HEK293T (cell line): ENCODE measurements at regions of chr11 and their contacts with region 1.

Region 1: GRCh38 chr11:73625696-73626318 is 20.6 kb upstream of the PLEKHB1 start:
- DNase-seq: peak; percentile 87

Region 2: GRCh38 chr11:73578592-73579185 is 47.1 kb before region 1 on chr11:
- CTCF ChIA-PET with region 1: no interaction called
- POLR2A ChIA-PET with region 1: no interaction called
- DNase-seq: no peak

Region 3: DNA sequence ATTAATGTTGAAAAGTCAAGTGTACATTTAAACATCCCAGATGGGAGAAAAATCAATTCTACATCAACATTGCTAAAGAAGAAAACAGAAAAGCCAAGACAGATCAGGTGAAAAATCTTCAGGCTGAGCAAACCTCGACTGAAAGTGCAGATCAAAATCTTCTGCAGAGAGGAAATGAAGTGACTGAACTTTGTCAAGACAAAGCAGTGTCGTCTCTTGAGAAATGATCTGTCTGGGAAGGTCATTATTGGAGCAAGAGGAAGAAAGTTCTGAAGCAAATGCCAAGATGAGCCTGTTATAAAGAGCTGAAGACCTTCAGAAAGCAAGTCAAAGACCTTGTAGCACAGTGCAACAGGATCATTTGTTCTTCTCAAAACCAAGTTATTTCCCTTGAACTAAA is 14.8 kb after region 1 on chr11:
- CTCF ChIA-PET with region 1: interaction called, 11 read pairs
- POLR2A ChIA-PET with region 1: no interaction called
- DNase-seq: no peak

Region 4: DNA sequence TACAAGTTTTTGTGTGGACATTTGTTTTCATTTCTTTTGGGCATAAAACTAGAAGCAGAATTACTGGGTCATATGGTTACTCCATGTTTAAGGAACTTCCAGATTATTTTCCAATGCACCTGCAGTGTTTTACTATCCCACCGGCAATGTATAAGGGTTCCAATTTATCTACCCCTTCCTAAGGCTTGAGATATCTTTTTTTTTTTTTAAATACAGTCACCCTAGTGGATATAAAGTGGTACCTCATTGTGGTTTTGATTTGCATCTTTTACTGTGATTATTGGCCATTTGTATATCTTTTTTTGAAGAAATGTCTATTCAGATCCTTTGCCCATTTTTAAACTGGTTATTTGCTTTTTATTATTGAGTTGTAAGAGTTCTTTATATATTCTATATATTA is 417.6 kb after region 1 on chr11:
- CTCF ChIA-PET with region 1: no interaction called
- POLR2A ChIA-PET with region 1: no interaction called
- DNase-seq: no peak

Region 5: DNA sequence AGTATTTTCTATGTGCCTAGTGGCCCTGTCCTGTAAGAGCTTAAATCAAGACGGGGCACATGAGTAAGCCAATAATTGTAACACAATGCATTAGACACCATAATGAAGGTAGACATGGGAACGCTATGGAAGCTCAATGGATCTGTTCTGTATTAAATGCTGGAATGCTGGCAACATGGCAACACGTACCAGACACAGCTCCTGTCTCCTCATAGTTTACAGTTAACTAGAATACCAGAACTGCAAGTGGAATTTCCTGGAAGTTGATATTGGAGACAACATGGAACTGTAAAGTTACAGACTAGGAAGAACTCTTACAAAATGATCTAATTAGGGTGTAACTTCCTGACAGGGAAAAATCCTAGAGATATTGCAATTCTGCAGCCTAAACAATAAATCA is 673.2 kb after region 1 on chr11:
- CTCF ChIA-PET with region 1: no interaction called
- POLR2A ChIA-PET with region 1: no interaction called
- DNase-seq: no peak